Prostate gland (tissue), 2 donors: ENCODE measurements at regions of chr10 and their contacts with region 1.

Region 1: GRCh38 chr10:15526754-15527153 is 155.7 kb upstream of the FAM171A1 start:
- DNase-seq: no peak
- H3K4me3 ChIP-seq: no peak overlapping the region
- H3K27ac ChIP-seq: no peak overlapping the region
- H3K4me1 ChIP-seq: no peaks in the 10 kb centered on the region
- H3K27me3 ChIP-seq: no peaks in the 10 kb centered on the region
- CTCF ChIP-seq: no peak
- POLR2A ChIP-seq: no peak

Region 2: DNA sequence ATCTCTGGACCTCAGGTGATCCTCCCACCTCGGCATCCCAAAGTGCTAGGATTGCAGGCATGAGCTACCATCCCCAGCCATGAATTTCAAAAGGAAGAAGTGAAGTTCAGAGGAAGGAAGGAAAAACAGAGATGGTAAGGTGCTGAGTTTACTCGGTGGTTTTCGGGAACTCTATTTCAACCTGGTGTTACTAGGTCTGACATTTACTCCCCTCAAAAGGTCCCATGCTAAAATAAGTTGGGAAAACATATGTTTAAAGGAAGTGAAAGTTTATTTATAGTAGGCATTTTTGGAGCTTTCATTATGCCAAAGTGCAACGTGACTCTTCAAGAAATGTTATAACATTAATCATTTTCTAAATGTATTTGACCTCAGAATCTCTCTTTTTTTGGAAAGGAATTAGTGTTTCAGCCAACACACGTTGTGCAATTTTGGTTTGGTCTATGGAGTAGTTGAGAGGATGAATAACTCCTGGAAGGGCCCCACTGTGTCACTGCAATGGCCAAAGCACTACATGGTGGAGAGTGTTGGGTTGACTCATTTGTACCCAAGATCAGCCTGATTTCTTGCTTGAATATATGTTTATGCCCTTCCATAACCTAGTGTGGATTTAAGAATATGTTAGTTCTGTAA is 41.0 kb before region 1 on chr10:
- intact Hi-C with region 1: loop called (anchors 5 kb)
- DNase-seq: no peak
- H3K4me3 ChIP-seq: no peak overlapping the region
- H3K27ac ChIP-seq: no peak overlapping the region
- H3K4me1 ChIP-seq: no peaks in the 10 kb centered on the region
- H3K27me3 ChIP-seq: no peaks in the 10 kb centered on the region
- CTCF ChIP-seq: no peak
- POLR2A ChIP-seq: no peak